H1 (cell line): ENCODE measurements at regions of chr9 and their contacts with region 1.

Region 1: GRCh38 chr9:19174127-19174912 is 47.0 kb upstream of the PLIN2 start:
- DNase-seq: peak in 1 of 2 experiments; percentile 50
- H3K4me3 ChIP-seq: no peak overlapping the region
- H3K27ac ChIP-seq: no peak overlapping the region
- H3K4me1 ChIP-seq: peaks cover 0 to 3% (median under 1%) of the 10 kb centered on the region in 4 experiments; a peak in 2 of 7 replicates
- H3K27me3 ChIP-seq: no peaks in the 10 kb centered on the region
- CTCF ChIP-seq: peak in 2 of 3 experiments; percentile 43 to 49; a peak in 2 of 4 replicates
- EP300 ChIP-seq: no peak
- POLR2A ChIP-seq: no peak
- RAD21 ChIP-seq: peak; percentile 74 to 76

Region 2: GRCh38 chr9:19085295-19085694 is 89.0 kb before region 1 on chr9:
- CTCF ChIA-PET with region 1: interaction called, 22 read pairs
- POLR2A ChIA-PET with region 1: interaction called, 3 read pairs
- DNase-seq: no peak
- H3K4me3 ChIP-seq: no peak overlapping the region
- H3K27ac ChIP-seq: no peak overlapping the region
- H3K4me1 ChIP-seq: no peaks in the 10 kb centered on the region
- H3K27me3 ChIP-seq: no peaks in the 10 kb centered on the region
- CTCF ChIP-seq: peak in 2 of 3 experiments; percentile 32 to 54; a peak in 3 of 4 replicates
- EP300 ChIP-seq: no peak
- POLR2A ChIP-seq: no peak
- RAD21 ChIP-seq: peak; percentile 41 to 51

Region 3: GRCh38 chr9:19102631-19103345 is 71.5 kb before region 1 on chr9 and contains the start of gene HAUS6:
- CTCF ChIA-PET with region 1: interaction called, 11 read pairs
- POLR2A ChIA-PET with region 1: no interaction called
- DNase-seq: peak; percentile 88 to 91
- H3K4me3 ChIP-seq: peak within 1 kb of the TSS; percentile 92 to 100 (median 94)
- H3K27ac ChIP-seq: peak within 1 kb of the TSS; percentile 70
- H3K4me1 ChIP-seq: peaks cover 0 to 3% (median 0%) of the 10 kb centered on the region in 4 experiments; a peak in 3 of 7 replicates
- H3K27me3 ChIP-seq: no peaks in the 10 kb centered on the region
- CTCF ChIP-seq: peak; percentile 19 to 61 (median 35)
- EP300 ChIP-seq: no peak
- POLR2A ChIP-seq: peak; percentile 63 to 95
- RAD21 ChIP-seq: no peak
- total RNA-seq, gene HAUS6: 52.4 and 53.4 TPM in 2 replicates

Region 4: GRCh38 chr9:19137282-19137681 is 37.0 kb before region 1 on chr9:
- CTCF ChIA-PET with region 1: interaction called, 13 read pairs
- POLR2A ChIA-PET with region 1: no interaction called
- DNase-seq: no peak
- H3K4me3 ChIP-seq: no peak overlapping the region
- H3K27ac ChIP-seq: no peak overlapping the region
- H3K4me1 ChIP-seq: no peaks in the 10 kb centered on the region; a peak in 1 of 7 replicates
- H3K27me3 ChIP-seq: no peaks in the 10 kb centered on the region
- CTCF ChIP-seq: no peak
- EP300 ChIP-seq: no peak
- POLR2A ChIP-seq: no peak
- RAD21 ChIP-seq: no peak

Region 5: DNA sequence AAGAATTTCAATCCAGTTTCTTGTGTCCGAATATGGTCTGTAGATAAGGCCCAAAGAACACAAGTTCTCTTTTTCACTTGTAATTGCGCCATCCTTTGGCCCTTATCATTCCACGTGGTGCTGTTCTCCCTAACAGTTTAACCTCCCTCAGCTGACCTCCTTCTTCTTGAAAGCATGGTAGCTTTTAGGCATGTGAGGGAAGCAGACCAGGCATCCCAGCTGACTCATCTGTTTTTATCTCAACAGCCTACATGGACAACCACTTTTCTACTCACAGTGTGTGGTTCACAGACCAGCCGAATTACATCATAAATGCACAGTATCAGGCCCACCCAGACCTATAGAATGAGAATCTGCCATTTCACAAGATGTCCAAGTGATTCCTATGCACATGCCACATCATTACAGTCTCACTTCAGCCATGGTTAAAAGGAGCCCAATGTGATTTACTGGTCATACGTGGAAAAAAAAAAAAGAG is 20.1 kb before region 1 on chr9:
- CTCF ChIA-PET with region 1: interaction called, 49 read pairs
- POLR2A ChIA-PET with region 1: no interaction called
- DNase-seq: no peak
- H3K4me3 ChIP-seq: no peak overlapping the region
- H3K27ac ChIP-seq: no peak overlapping the region
- H3K4me1 ChIP-seq: no peaks in the 10 kb centered on the region
- H3K27me3 ChIP-seq: no peaks in the 10 kb centered on the region; a peak in 1 of 7 replicates
- CTCF ChIP-seq: no peak
- EP300 ChIP-seq: no peak
- POLR2A ChIP-seq: no peak
- RAD21 ChIP-seq: no peak

Region 6: GRCh38 chr9:19161257-19162025 is 12.9 kb before region 1 on chr9:
- CTCF ChIA-PET with region 1: interaction called, 49 read pairs
- POLR2A ChIA-PET with region 1: no interaction called
- DNase-seq: no peak
- H3K4me3 ChIP-seq: no peak overlapping the region
- H3K27ac ChIP-seq: no peak overlapping the region
- H3K4me1 ChIP-seq: peaks cover 0 to 5% (median 0%) of the 10 kb centered on the region in 4 experiments; a peak in 3 of 7 replicates
- H3K27me3 ChIP-seq: no peaks in the 10 kb centered on the region
- CTCF ChIP-seq: no peak
- EP300 ChIP-seq: no peak
- POLR2A ChIP-seq: no peak
- RAD21 ChIP-seq: no peak

Region 7: GRCh38 chr9:19184144-19184917 is 10.0 kb after region 1 on chr9:
- CTCF ChIA-PET with region 1: interaction called, 13 read pairs
- POLR2A ChIA-PET with region 1: no interaction called
- DNase-seq: no peak
- H3K4me3 ChIP-seq: no peak overlapping the region
- H3K27ac ChIP-seq: no peak overlapping the region
- H3K4me1 ChIP-seq: no peaks in the 10 kb centered on the region
- H3K27me3 ChIP-seq: peaks cover 0 to 1% (median 0%) of the 10 kb centered on the region in 4 experiments; a peak in 1 of 7 replicates
- CTCF ChIP-seq: no peak
- EP300 ChIP-seq: no peak
- POLR2A ChIP-seq: no peak
- RAD21 ChIP-seq: no peak